ENCODE measurements at regions of chr2 and their contacts with region 1.

Region 1: GRCh38 chr2:88627056-88627855 is at the start of gene EIF2AK3:
- DNase-seq: peak; percentile 99
- ATAC-seq: peak; percentile 90 to 93 (median 92)
- H3K4me3 ChIP-seq: peak within 1 kb of the TSS; percentile 91
- H3K27ac ChIP-seq: peak within 1 kb of the TSS; percentile 97
- H3K4me1 ChIP-seq: peaks cover 36% of the 10 kb centered on the region
- H3K27me3 ChIP-seq: no peaks in the 10 kb centered on the region
- CTCF ChIP-seq: no peak
- total RNA-seq, gene EIF2AK3: 5.0 to 9.6 (median 8.0) TPM

Region 2: GRCh38 chr2:88011011-88011410 is 616.2 kb before region 1 on chr2:
- intact Hi-C with region 1: no loop called
- DNase-seq: no peak
- ATAC-seq: no peak
- H3K4me3 ChIP-seq: no peak overlapping the region
- H3K27ac ChIP-seq: no peak overlapping the region
- H3K4me1 ChIP-seq: no peaks in the 10 kb centered on the region
- H3K27me3 ChIP-seq: no peaks in the 10 kb centered on the region
- CTCF ChIP-seq: no peak

Region 3: GRCh38 chr2:88590998-88591613 is 36.1 kb before region 1 on chr2:
- intact Hi-C with region 1: loop called (anchors 5 kb)
- DNase-seq: no peak
- ATAC-seq: peak; percentile 80 to 95 (median 86)
- H3K4me3 ChIP-seq: no peak overlapping the region
- H3K27ac ChIP-seq: no peak overlapping the region
- H3K4me1 ChIP-seq: no peaks in the 10 kb centered on the region
- H3K27me3 ChIP-seq: no peaks in the 10 kb centered on the region
- CTCF ChIP-seq: peak; percentile 86

Region 4: DNA sequence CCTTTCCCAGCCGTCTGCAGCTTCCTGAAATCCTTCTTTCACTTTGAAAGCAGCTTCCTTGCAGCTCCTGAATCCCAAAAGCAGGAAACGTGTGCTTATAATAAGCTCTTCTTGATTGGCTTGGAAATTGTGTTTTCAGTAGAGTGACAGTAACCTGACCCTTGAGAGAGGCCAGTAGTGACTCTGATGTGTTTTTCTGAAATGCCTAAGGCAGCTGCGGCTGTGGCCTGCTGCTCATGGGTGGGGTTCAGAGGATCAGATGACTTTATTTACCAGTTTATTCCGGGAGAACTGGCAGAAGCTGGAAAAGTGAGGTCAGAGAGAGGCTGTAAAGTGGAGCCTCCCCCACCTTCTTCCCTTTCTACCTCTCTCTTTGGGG is 32.3 kb after region 1 on chr2:
- intact Hi-C with region 1: loop called in 1 of 2 experiments (anchors 1 kb)
- DNase-seq: peak; percentile 44 to 82
- ATAC-seq: peak; percentile 95 to 98 (median 96)
- H3K4me3 ChIP-seq: peak overlapping the region; percentile 55
- H3K27ac ChIP-seq: peak overlapping the region; percentile 95
- H3K4me1 ChIP-seq: peaks cover 29% of the 10 kb centered on the region
- H3K27me3 ChIP-seq: no peaks in the 10 kb centered on the region
- CTCF ChIP-seq: no peak

Region 5: DNA sequence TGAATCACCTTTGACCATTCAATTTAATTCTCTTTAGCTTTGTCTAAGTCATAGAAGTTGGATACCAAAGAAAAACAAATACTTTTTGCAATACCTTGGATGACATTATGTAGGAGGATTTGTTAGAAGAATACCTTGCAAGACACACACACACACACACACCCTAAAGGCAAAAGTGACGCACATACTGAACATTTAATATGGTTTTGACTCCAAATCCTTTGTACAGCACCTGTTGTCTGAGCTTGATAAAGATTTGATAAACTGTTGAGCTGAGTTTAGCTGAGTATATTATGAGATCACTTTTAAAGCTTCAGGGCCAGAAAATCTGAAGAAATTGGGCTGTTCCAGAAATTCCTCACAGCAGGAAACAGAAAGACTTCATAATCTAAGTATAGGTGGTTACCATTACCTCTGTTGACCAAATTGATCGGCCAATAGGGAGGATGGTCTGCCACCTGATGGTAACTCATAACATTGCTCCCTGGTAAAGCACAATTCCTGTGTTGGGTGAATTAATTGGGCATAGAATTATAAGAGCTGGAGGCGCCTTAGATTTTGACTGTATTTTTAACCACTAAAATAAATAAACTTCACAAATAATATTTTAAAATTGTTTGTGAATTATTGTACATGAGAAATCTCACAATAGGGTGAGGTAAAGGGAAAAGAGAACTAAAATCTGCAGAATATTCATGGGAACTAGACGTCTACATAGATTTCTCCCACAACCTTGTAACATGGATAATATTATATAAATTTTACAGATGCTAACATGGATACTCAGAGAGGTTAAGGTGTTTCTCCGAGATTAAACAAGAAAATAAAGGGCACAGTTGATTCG is 42.3 kb after region 1 on chr2:
- intact Hi-C with region 1: loop called in 1 of 2 experiments (anchors 5 kb)
- DNase-seq: no peak
- ATAC-seq: peak; percentile 85 to 94 (median 90)
- H3K4me3 ChIP-seq: no peak overlapping the region
- H3K27ac ChIP-seq: peak overlapping the region; percentile 56
- H3K4me1 ChIP-seq: peaks cover 9% of the 10 kb centered on the region
- H3K27me3 ChIP-seq: no peaks in the 10 kb centered on the region
- CTCF ChIP-seq: peak; percentile 67